ENCODE measurements at regions of chr2 and their contacts with region 1.

Region 1: DNA sequence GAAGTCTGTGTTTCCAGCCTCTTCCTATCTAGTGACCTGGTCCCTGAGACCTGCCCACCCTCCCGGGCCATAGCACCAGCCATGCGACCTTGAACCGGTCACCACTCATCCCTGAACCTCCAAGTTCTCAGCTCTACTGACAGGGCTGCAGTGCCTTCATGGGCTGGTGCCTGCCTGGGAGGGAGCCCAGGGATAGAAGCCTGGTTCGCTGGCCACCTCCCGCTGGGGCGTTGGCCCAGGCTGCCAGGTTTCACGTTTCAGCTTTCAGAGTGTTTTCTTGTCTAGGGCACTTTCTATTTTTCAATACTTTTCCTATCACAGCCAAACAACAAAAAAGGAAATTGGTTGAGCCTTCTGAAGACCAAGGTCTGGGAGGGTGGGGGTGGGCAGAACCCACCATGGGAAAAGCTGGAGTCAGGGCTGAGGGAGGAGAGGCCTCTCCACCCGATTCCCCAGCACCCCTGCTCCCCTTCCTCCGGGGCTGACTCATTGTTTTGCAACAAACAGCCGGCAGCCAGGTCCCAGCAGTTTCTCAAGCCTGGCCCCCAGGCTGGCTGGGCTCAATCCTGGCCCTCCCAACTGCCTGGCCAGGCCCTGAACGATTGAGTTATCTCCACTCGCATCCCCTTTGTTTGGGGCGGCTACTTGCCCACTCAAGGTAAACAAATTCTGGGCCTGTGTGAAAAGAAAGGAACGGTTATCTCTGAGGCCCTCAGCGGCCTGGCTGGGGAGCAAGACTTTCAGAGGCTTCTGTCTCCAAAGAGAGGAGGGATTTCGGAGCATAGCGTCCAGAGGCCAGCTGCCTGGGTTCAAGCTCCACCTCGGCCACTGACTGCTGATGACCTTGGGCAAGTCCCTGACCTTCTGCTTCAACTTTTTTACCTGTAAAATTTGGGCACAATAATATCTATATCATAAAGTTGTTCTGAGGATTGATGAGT is 47.5 kb downstream of the ZFP36L2 start:
- DNase-seq: peak in 1 of 10 donors; percentile 25
- ATAC-seq: no peak
- H3K4me3 Mint-ChIP-seq: peak overlapping the region in 9 of 10 donors; percentile 22 to 73 (median 52)
- H3K27ac Mint-ChIP-seq: peak overlapping the region; percentile 89 to 99 (median 94)
- H3K4me1 Mint-ChIP-seq: peaks cover 39 to 72% (median 65%) of the 10 kb centered on the region in 4 donors
- H3K27me3 Mint-ChIP-seq: no peaks in the 10 kb centered on the region

Region 2: GRCh38 chr2:43105586-43106558 is 73.0 kb before region 1 on chr2:
- POLR2A ChIA-PET with region 1: no interaction called
- DNase-seq: no peak
- ATAC-seq: peak in 1 of 2 donors; percentile 50
- H3K4me3 Mint-ChIP-seq: peak overlapping the region in 3 of 10 donors; percentile 36 to 56 (median 52)
- H3K27ac Mint-ChIP-seq: peak overlapping the region in 9 of 10 donors; percentile 25 to 89 (median 67)
- H3K4me1 Mint-ChIP-seq: peaks cover 22 to 70% (median 51%) of the 10 kb centered on the region in 4 donors
- H3K27me3 Mint-ChIP-seq: no peaks in the 10 kb centered on the region

Region 3: GRCh38 chr2:43158259-43158880 is 20.5 kb before region 1 on chr2:
- POLR2A ChIA-PET with region 1: interaction called, 42 read pairs
- DNase-seq: peak in 3 of 10 donors; percentile 46 to 72 (median 56)
- ATAC-seq: peak; percentile 43 to 60
- H3K4me3 Mint-ChIP-seq: peak overlapping the region; percentile 76 to 89 (median 82)
- H3K27ac Mint-ChIP-seq: peak overlapping the region; percentile 94 to 100 (median 98)
- H3K4me1 Mint-ChIP-seq: peaks cover 45 to 93% (median 89%) of the 10 kb centered on the region in 4 donors
- H3K27me3 Mint-ChIP-seq: no peaks in the 10 kb centered on the region

Region 4: DNA sequence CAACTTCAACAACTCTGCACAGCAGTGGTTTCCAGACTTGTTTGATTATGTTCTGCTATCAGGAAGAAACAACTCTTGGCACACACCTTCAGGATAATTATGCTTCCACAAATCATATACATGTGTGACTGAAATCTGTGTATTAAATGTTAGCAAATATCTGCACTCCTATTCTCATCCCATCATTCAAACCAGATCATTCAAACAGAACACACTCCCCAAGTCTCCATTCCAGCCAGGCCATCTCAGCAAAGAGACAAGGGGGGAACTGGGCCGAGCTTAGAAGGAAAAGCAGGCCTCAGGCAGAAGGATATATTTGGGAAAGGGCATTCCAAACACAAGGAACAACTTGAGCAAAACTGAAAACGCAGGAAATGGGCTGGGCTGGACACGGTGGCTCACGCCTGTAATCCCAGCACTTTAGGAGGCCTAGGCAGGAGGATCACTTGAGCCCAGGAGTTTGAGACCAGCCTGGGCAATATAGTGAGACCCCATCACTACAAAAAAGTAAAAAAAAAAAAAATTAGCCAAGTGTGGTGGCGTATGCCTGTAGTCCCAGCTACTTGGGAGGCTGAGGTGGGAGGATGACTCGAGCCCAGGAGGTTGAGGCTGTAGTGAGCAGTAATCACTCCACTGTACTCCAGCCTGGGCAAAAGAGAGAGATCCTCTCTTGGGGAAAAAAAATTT is 15.1 kb before region 1 on chr2:
- POLR2A ChIA-PET with region 1: interaction called, 47 read pairs
- DNase-seq: no peak
- ATAC-seq: no peak
- H3K4me3 Mint-ChIP-seq: peak overlapping the region in 1 of 10 donors; percentile 37
- H3K27ac Mint-ChIP-seq: peak overlapping the region; percentile 31 to 96 (median 84)
- H3K4me1 Mint-ChIP-seq: peaks cover 31 to 83% (median 80%) of the 10 kb centered on the region in 4 donors
- H3K27me3 Mint-ChIP-seq: no peaks in the 10 kb centered on the region

Region 5: DNA sequence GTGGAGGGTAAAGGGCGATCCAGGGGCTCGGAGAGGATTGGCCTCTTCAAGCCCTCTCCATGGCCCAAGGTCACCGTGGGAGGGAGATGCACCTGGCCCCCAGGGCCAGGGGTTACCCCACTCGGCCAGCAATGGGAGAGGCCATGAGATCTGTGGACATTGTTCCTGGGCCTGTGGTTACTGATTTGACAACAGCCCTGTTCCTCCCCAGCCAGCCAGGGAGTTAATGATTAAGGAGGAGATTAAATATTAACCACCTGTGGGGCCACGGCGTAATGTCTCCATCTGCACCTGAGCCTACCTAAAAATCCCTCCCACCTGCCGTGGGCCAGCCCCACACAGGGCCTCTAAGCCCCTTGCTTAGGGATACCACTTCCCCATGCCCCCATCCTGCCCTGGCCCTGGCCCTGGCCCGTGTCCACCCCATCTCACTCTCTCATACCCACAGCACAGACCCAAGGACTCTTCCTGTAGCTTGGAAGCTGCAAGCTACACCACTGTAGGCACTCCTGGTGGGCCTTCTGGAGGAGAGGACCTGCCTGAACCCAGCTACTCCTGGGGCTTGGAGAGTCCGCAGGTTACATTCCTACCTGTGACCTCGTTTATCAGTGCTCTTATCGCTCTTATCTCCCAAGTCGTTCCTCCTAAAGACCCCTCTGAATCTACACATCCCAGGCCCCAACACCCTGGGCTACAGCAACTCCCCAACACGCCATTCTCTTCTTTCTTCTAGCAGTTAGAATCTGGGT is 15.4 kb after region 1 on chr2:
- POLR2A ChIA-PET with region 1: interaction called, 559 read pairs
- DNase-seq: no peak
- ATAC-seq: peak; percentile 2 to 13
- H3K4me3 Mint-ChIP-seq: peak overlapping the region; percentile 81 to 96 (median 90)
- H3K27ac Mint-ChIP-seq: peak overlapping the region; percentile 96 to 100 (median 99)
- H3K4me1 Mint-ChIP-seq: peaks cover 36 to 76% (median 66%) of the 10 kb centered on the region in 4 donors
- H3K27me3 Mint-ChIP-seq: no peaks in the 10 kb centered on the region

Region 6: DNA sequence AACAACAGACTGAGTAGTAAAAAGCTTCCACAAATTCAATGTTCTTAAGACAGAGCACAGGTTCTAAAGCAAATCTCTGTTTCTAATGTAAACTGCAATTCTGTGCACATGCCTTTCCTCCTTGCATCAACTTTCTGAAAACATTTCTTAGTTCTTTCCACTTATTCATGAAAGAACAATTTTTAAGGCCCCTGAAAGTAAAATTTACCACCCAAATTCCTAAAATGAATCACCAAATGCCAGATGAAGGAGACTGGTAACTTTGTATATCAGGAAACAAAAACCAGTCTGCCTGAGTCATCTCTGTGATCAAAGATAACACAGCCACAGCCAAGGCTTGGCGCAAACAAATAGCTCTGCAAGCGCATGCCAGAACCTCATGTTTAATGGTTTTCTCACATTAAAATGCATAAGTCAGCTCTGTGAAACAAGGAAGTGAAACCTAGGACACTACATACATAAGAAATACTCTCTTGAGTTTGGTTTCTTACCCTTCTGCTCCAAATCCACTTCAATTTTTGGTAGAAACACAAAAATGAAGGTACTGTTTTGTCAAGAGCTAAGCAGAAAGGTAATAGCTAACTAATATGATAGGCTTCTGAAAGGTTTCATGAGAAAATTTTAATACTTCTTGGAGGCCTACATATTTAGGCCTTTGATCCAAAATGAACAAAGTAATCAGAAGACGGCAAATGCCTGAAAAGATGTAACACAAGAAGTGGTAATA is 247.6 kb after region 1 on chr2:
- POLR2A ChIA-PET with region 1: no interaction called
- DNase-seq: peak in 6 of 10 donors; percentile 25 to 68 (median 30)
- ATAC-seq: peak; percentile 74 to 96
- H3K4me3 Mint-ChIP-seq: peak overlapping the region in 5 of 10 donors; percentile 3 to 48 (median 33)
- H3K27ac Mint-ChIP-seq: peak overlapping the region in 8 of 10 donors; percentile 34 to 94 (median 60)
- H3K4me1 Mint-ChIP-seq: peaks cover 14 to 43% (median 31%) of the 10 kb centered on the region in 4 donors
- H3K27me3 Mint-ChIP-seq: no peaks in the 10 kb centered on the region